ENCODE measurements at regions of chr3 and their contacts with region 1.

Region 1: DNA sequence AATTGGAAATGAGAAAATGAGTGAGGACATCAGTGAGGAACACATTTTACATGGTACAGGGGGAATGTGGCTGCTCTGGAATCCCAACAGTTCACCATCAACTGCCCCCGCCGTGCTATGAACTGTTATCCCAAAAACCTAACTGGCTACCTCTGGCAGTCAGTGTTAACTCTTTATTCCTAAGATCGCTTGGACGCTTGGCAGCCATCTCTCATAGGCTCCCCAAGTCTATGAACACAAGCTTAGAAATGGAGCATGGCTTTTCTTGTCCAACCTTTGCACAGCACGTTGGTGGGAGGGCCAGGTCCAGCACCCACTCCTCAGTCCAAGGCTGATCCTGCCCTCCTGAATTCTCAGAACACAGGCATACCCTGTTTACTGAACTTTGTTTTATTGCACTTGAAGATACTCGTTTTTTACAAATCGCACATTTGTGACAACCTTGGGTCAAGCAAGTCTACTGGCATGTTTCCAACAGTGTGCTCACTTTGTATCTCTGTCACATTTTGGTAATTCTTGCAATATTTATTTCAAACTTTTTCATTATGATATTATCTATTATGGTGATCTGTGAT is 53.6 kb downstream of the SENP2 start:
- DNase-seq: no peak
- H3K4me3 ChIP-seq: no peak overlapping the region
- H3K27ac ChIP-seq: no peak overlapping the region
- H3K4me1 ChIP-seq: no peaks in the 10 kb centered on the region
- H3K27me3 ChIP-seq: no peaks in the 10 kb centered on the region
- CTCF ChIP-seq: no peak

Region 2: GRCh38 chr3:185605566-185605965 is 34.2 kb before region 1 on chr3:
- CTCF ChIA-PET with region 1: no interaction called
- dilution Hi-C with region 1: loop called (anchors 5 kb)
- in situ Hi-C with region 1: no loop called
- intact Hi-C with region 1: no loop called
- DNase-seq: no peak
- H3K4me3 ChIP-seq: no peak overlapping the region
- H3K27ac ChIP-seq: no peak overlapping the region
- H3K4me1 ChIP-seq: no peaks in the 10 kb centered on the region
- H3K27me3 ChIP-seq: no peaks in the 10 kb centered on the region
- CTCF ChIP-seq: no peak